IMR-90 (cell line): ENCODE measurements at regions of chr20 and their contacts with region 1.

Region 1: DNA sequence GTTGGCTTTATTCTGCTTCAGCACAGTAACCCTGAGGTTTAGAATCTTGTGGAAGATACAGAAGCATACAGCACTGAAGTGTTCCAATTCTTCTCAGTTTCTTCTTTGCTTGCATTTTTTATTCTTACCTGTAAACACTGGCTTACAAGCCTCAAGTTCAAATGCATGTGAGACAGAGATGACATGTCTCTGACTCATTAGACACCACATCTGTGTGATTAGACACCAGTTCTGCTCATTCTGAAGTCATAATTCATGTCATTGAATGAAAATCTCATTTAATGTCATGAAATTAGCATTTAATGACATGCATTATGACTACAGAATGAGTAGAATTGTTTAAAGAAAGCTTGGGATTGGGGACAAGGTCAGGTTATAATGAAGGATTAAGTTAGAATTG is 5.8 kb downstream of the GZF1 start:
- DNase-seq: peak; percentile 57
- ATAC-seq: no peak
- H3K4me3 ChIP-seq: no peak overlapping the region
- H3K27ac ChIP-seq: no peak overlapping the region
- H3K4me1 ChIP-seq: peaks cover 11% of the 10 kb centered on the region
- H3K27me3 ChIP-seq: no peaks in the 10 kb centered on the region
- CTCF ChIP-seq: no peak
- POLR2A ChIP-seq: no peak
- RAD21 ChIP-seq: no peak

Region 2: GRCh38 chr20:23393996-23394775 is 26.4 kb after region 1 on chr20:
- CTCF ChIA-PET with region 1: no interaction called
- POLR2A ChIA-PET with region 1: no interaction called
- dilution Hi-C with region 1: no loop called
- in situ Hi-C with region 1: no loop called
- intact Hi-C with region 1: loop called (anchors 2 kb)
- DNase-seq: peak; percentile 37
- ATAC-seq: no peak
- H3K4me3 ChIP-seq: no peak overlapping the region
- H3K27ac ChIP-seq: no peak overlapping the region
- H3K4me1 ChIP-seq: peaks cover 5% of the 10 kb centered on the region; the same call in 1 of the 2 replicates
- H3K27me3 ChIP-seq: no peaks in the 10 kb centered on the region
- CTCF ChIP-seq: no peak
- POLR2A ChIP-seq: no peak
- RAD21 ChIP-seq: no peak